GM10248 (cell line): ENCODE measurements at regions of chr7 and their contacts with region 1.

Region 1: GRCh38 chr7:33821970-33822369 is 83.4 kb upstream of the BMPER start:
- DNase-seq: no peak
- CTCF ChIP-seq: no peak

Region 2: DNA sequence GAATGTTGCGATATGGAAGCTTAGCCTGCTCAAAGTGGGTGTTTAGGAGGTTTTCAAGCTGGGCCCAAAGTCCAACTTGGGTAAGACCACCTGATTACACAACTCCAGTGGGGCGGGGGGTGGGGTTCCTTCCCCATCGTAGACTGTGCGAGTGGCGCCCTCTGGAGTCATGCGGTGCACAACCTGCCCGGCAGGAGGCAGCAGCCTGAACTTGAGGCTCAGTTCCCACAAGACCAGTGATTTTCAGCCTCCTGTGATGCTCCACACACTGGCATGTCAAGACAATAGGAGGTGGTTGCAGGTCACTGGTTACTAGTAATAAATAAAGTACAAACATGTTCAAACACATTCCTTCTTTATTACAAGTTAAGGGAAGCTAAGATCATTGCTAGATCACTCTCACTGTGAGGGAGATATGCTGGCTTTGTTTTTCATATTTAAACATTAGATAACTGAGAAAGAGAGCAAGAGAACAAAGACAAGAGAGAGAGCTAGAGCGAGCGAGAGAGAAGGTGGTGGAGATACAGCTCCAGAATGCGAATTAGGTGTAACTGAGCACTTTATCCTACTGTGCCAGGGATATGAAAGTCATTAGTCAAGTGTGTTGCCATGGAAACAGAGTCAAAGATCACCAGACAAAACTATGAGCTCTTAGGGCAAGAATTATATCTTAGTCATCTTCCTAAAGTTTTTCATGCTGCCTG is 14.0 kb before region 1 on chr7:
- CTCF ChIA-PET with region 1: interaction called, 29 read pairs
- POLR2A ChIA-PET with region 1: no interaction called
- DNase-seq: no peak
- CTCF ChIP-seq: peak; percentile 30